PC-9 (cell line): ENCODE measurements at regions of chr10 and their contacts with region 1.

Region 1: DNA sequence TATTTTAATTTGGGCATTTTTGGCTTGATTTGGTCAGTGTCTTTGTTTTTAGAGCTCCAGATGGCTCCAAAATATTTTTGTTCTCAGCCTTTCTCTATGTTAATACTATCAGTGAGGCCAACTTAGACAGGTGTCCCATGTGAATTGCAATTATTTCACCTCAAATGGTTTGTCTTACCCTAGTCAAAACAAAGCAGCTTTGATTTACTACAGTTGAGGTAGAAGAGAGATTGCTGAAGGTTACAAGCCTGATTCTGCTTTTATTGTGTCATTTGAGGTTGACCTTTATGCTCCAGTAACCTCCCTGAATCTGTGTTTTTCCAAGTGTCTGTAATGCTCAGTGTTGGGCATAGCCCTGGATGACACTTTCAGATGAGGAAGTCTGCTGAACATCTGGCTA is 882.9 kb downstream of the NRG3 start:
- DNase-seq: no peak
- H3K4me3 ChIP-seq: no peak overlapping the region
- H3K27ac ChIP-seq: no peak overlapping the region
- H3K4me1 ChIP-seq: no peaks in the 10 kb centered on the region
- H3K27me3 ChIP-seq: no peaks in the 10 kb centered on the region
- CTCF ChIP-seq: no peak

Region 2: DNA sequence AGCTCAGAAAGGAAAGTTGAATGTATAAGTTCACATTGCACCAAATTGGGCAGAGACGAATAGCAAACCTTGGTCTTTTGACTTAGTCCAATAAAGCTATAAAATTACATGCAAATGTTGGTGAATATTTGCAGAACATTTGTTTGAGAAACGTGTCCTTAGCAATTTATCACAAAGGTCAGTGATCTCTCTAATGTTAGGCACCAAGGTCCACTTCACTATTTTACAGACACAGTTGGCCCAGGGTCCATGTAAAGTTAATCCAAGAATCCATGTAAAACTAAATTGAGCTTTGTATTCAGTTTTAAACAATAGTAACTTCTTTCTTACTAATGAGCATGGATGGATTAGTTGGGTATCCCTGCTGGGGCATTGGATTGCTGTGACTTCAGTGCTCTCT is 265.2 kb before region 1 on chr10:
- CTCF ChIA-PET with region 1: no interaction called
- POLR2A ChIA-PET with region 1: interaction called, 12 read pairs
- intact Hi-C with region 1: no loop called
- DNase-seq: no peak
- H3K4me3 ChIP-seq: no peak overlapping the region
- H3K27ac ChIP-seq: no peak overlapping the region
- H3K4me1 ChIP-seq: no peaks in the 10 kb centered on the region
- H3K27me3 ChIP-seq: no peaks in the 10 kb centered on the region
- CTCF ChIP-seq: no peak